Vagina (tissue), 2 donors: ENCODE measurements at regions of chr9 and their contacts with region 1.

Region 1: DNA sequence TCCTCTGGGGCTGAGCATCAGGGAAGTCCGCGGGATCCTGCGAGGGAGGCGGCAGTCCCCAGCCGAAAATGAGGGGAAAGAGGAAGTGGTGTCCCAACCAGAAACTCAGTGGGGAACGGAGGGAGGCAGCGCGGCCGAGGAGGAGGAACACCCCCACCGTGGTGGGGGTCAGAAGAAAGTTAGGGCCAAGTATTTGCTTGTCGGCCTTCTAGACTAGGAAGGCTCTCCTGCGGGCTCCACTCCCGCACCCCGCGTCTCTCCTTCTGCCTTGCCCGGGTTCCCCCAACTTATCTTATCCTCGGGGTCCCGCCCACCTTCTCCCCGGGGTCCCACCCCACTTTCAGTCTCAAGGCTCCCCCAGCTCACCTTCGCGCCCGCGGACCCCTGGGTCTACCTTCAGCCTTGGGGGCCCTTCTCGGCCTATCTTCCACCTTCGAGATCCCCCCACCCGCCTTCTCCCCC is 557 bp upstream of the PHF2 start:
- DNase-seq: peak in 1 of 2 donors; percentile 86
- H3K4me3 ChIP-seq: peak overlapping the region; percentile 72 to 86
- H3K27ac ChIP-seq: peak overlapping the region; percentile 91
- H3K4me1 ChIP-seq: peaks cover 48% of the 10 kb centered on the region
- H3K27me3 ChIP-seq: no peaks in the 10 kb centered on the region
- CTCF ChIP-seq: no peak
- POLR2A ChIP-seq: peak in 1 of 2 donors; percentile 23

Region 2: DNA sequence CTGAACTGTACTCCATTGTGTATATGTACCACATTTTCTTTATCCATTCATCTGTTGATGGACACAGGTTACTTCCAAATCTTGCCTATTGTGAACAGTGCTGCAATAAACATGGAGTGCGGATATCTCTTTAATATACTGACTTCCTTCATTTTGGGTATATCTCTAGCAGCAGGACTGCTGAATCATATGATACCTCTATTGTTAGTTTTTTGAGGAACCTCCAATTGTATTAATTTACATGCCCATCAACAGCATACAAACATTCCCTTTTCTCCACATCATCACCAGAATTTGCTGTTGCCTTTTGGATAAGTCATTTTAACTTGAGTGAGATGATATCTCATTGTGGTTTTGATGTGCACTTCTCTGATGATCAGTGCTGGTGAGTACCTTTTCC is 206.1 kb before region 1 on chr9:
- intact Hi-C with region 1: no loop called
- DNase-seq: no peak
- H3K4me3 ChIP-seq: no peak overlapping the region
- H3K27ac ChIP-seq: no peak overlapping the region
- H3K4me1 ChIP-seq: no peaks in the 10 kb centered on the region
- H3K27me3 ChIP-seq: no peaks in the 10 kb centered on the region
- CTCF ChIP-seq: no peak
- POLR2A ChIP-seq: no peak

Region 3: GRCh38 chr9:93453047-93453914 is 122.5 kb before region 1 on chr9 and contains the start of gene FAM120AOS:
- intact Hi-C with region 1: loop called (anchors 5 kb)
- DNase-seq: peak in 1 of 2 donors; percentile 97
- H3K4me3 ChIP-seq: peak within 1 kb of the TSS; percentile 81 to 97
- H3K27ac ChIP-seq: peak within 1 kb of the TSS; percentile 95
- H3K4me1 ChIP-seq: peaks cover 70% of the 10 kb centered on the region
- H3K27me3 ChIP-seq: no peaks in the 10 kb centered on the region
- CTCF ChIP-seq: no peak
- POLR2A ChIP-seq: peak in 1 of 2 donors; percentile 59
- total RNA-seq, gene FAM120AOS: 41.5 TPM